ENCODE measurements at regions of chr5 and their contacts with region 1.

Region 1: DNA sequence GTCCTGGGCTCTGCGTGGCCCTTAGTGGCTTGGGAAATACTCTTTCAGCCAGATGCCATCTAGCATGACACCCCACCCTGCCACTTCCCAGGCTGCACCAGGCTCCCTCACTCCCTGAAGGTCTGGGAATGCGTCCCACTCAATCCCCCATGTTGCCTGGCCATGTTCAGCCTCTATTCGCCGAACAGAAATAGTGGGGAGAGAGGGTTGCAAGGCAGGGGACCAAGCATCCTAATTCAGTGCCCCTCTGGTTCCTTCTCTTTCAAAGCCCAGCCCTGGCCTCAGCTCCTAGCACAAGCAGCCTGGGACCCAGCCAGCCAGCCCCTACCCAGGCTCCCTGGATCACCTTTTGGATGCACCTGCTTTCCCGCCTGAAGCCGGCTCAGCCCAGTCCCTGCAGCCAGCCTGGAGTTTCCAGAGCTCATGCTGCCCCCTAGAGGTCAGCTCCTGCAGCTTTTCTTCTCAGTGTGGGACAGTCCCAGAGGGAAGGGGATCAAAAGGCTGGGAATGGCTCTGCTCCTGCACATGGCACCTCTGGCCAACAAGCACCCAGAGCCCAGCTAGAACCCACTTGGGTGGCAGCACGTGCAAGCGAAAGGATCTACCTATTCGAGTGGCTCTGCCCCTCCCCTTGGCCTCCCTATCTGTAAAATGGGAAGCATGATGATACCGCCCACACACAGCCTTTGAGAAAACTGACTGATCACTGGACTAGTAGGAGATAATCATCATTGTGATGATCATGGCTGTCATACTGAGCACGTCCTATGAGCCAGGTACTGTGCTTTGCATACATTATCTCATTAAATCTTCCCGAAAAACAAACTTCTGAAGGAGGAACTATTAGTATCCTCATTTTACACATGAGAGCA is 48.7 kb upstream of the C5orf58 start:
- DNase-seq: no peak
- H3K4me3 ChIP-seq: no peak overlapping the region
- H3K27me3 ChIP-seq: peaks cover 2% of the 10 kb centered on the region; the same call in 1 of the 2 replicates
- CTCF ChIP-seq: peak; percentile 84

Region 2: GRCh38 chr5:170100066-170100943 is 83.7 kb before region 1 on chr5:
- CTCF ChIA-PET with region 1: interaction called, 79 read pairs
- POLR2A ChIA-PET with region 1: no interaction called
- DNase-seq: peak; percentile 15
- H3K4me3 ChIP-seq: no peak overlapping the region
- H3K27me3 ChIP-seq: 0 out of 2 replicates have a peak, but pooled peaks cover 1% of the 10 kb centered on the region
- CTCF ChIP-seq: peak; percentile 68

Region 3: DNA sequence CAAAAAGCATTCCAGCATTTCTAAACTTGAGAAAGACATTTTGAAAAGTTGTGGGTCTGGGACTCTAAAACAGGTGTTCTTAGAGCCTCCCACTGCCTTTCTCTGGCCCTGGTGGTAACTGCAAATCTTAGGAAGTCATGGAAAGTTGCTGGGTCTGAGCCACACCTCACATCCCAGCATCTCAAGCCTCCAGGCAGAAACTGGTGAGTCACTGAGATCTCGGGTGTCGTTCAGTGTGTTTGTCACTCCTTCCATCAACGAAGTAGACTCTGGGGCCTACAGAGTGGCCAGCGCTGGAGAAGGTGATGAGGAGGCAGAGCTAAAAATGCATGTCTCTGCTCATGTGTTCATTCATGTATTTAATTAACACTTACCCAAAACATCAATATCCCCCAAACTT is 10.8 kb before region 1 on chr5:
- CTCF ChIA-PET with region 1: interaction called, 24 read pairs
- POLR2A ChIA-PET with region 1: no interaction called
- DNase-seq: no peak
- H3K4me3 ChIP-seq: no peak overlapping the region
- H3K27me3 ChIP-seq: no peaks in the 10 kb centered on the region; the same call in none of the 2 replicates
- CTCF ChIP-seq: no peak

Region 4: DNA sequence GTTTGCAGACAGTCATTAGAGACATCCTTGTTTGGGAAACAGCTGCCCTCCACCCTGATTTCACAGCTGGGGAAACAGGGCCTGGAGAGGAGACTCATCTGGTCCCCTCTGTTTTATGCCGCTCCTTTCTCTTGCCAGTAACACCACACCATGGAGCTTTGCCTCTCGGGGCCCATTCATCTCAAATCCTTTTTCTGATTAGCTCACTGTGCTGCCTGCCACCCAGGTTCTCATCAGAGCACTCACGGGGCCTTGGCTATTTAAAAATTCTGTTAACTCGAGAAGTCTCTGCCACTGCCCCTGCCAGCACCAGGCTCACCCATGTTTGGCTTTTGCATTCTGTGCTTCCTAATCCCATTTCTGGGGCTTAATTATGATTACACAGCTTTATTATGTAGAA is 11.9 kb after region 1 on chr5:
- CTCF ChIA-PET with region 1: interaction called, 38 read pairs
- POLR2A ChIA-PET with region 1: no interaction called
- DNase-seq: no peak
- H3K4me3 ChIP-seq: no peak overlapping the region
- H3K27me3 ChIP-seq: no peaks in the 10 kb centered on the region; the same call in 1 of the 2 replicates
- CTCF ChIP-seq: no peak